ENCODE measurements at regions of chr4 and their contacts with region 1.

Region 1: DNA sequence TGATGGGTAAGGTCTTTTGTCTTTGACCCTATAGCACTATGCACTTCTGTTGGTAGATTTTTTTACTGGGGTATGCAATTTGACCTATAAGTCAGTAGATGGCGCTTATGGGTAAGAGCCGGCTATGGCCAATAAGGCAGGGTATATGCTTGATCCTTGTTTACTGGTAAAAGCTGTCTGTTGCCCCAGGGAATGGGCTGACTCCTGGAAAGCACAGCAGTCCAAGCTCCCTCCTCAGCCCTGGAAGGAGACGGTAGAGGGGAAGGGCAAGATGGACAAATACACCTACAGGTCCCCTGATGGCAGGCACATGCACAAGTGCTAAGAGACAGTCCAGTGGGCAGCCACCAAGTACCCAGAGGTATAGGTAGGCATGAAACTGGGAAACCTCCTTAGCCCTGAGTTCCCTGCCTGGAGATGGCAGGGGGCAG is 63.7 kb downstream of the ADAMTS3 start:
- DNase-seq: no peak
- H3K4me3 ChIP-seq: no peak overlapping the region
- H3K27ac ChIP-seq: no peak overlapping the region
- H3K4me1 ChIP-seq: no peaks in the 10 kb centered on the region
- H3K27me3 ChIP-seq: no peaks in the 10 kb centered on the region
- CTCF ChIP-seq: peak; percentile 55 to 73 (median 59)
- EP300 ChIP-seq: no peak
- POLR2A ChIP-seq: no peak

Region 2: DNA sequence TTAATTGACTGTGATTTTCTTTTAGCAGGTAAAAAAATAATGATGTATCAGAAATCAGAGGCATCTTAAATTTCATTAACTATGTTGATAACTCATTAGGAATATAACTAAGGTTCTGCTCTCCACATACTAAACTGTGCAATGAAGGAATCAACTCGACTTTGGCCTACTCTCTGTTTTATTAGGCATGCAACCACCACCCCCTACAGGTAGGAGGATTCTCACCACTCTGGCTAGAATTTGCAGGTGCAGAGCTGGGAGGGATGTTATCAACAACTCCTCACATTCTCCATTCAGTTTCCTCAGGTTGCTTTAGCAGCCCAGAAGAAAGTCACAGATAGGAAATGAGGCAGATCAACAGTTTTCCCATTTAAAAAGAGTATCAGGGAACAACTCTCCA is 404.1 kb after region 1 on chr4:
- intact Hi-C with region 1: loop called (anchors 2 kb)
- DNase-seq: no peak
- H3K4me3 ChIP-seq: no peak overlapping the region
- H3K27ac ChIP-seq: no peak overlapping the region
- H3K4me1 ChIP-seq: no peaks in the 10 kb centered on the region
- H3K27me3 ChIP-seq: no peaks in the 10 kb centered on the region
- CTCF ChIP-seq: peak; percentile 16 to 35 (median 20)
- EP300 ChIP-seq: no peak
- POLR2A ChIP-seq: no peak

Region 3: DNA sequence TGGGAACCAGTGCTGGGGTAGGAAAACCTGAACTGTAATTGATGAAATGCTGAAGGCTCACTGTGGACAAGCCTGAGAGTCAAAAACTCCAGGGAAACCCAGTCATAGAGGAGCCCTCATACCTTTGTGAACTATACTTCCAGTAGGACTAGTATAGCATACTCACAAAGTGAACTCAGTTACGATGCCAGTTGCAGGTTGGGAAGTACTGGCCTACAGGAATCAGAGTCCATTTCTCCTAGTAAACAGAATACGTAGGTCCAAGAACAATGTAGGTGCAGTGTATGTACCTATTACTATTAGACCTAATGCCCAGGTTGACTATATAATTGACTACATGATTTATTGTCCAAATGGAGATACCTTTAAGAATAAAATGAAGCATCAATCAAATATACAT is 761.7 kb after region 1 on chr4:
- intact Hi-C with region 1: no loop called
- DNase-seq: no peak
- H3K4me3 ChIP-seq: no peak overlapping the region
- H3K27ac ChIP-seq: no peak overlapping the region
- H3K4me1 ChIP-seq: no peaks in the 10 kb centered on the region
- H3K27me3 ChIP-seq: no peaks in the 10 kb centered on the region
- CTCF ChIP-seq: no peak
- EP300 ChIP-seq: no peak
- POLR2A ChIP-seq: no peak

Measured in esophagus muscularis mucosa (tissue), 4 donors.